ENCODE measurements at regions of chr12 and their contacts with region 1.

Region 1: DNA sequence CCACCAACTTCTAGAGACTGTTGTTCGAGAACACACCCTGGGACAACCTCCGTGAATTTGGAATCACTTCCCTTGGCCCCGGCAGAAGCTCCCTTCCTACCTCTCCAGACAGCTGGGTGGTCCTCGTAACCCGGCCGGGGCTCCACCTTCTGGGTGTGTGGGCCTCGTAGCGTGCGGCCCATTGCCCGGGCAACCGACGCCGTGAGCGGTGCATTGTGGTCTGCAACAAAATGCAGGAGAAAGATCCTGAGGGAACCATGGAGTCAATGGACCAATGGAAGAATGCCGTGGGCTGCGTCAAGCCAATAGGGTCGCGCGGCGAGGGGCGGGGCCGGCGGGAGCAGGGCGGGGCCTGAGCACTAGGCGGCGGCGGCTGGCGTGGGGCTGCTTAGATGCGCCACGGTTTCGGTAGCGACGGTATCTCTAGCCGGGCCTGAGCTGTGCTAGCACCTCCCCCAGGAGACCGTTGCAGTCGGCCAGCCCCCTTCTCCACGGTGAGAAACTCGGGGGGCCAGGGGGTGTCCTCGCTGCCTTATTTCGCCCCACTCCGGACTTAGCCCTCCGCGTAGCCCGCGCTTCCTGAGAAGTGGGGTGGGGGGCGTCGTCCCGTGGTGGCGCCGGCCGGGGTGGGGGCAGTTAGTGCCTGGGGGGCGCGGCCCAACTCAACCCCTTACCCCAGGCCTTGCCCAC is at the start of gene DYNLL1:
- DNase-seq: peak; percentile 98
- H3K4me3 ChIP-seq: peak within 1 kb of the TSS; percentile 64 to 98 (median 90)
- H3K27ac ChIP-seq: no peak within 1 kb of the TSS
- H3K4me1 ChIP-seq: peaks cover 15% of the 10 kb centered on the region
- H3K27me3 ChIP-seq: no peaks in the 10 kb centered on the region
- CTCF ChIP-seq: no peak
- POLR2A ChIP-seq: peak; percentile 99
- total RNA-seq, gene DYNLL1: 469 TPM in 2 replicates

Region 2: GRCh38 chr12:120342156-120342555 is 153.7 kb before region 1 on chr12:
- CTCF ChIA-PET with region 1: no interaction called
- POLR2A ChIA-PET with region 1: no interaction called
- dilution Hi-C with region 1: no loop called
- intact Hi-C with region 1: no loop called
- DNase-seq: no peak
- H3K4me3 ChIP-seq: no peak overlapping the region
- H3K27ac ChIP-seq: no peak overlapping the region
- H3K4me1 ChIP-seq: no peaks in the 10 kb centered on the region
- H3K27me3 ChIP-seq: no peaks in the 10 kb centered on the region
- CTCF ChIP-seq: no peak
- POLR2A ChIP-seq: no peak

Region 3: GRCh38 chr12:120437754-120438494 is 57.9 kb before region 1 on chr12 and contains the start of gene COX6A1:
- CTCF ChIA-PET with region 1: no interaction called
- POLR2A ChIA-PET with region 1: interaction called, 3 read pairs
- dilution Hi-C with region 1: no loop called
- intact Hi-C with region 1: loop called (anchors 2 kb)
- DNase-seq: peak; percentile 91
- H3K4me3 ChIP-seq: peak within 1 kb of the TSS; percentile 48 to 76 (median 49)
- H3K27ac ChIP-seq: peak within 1 kb of the TSS; percentile 2
- H3K4me1 ChIP-seq: peaks cover 14% of the 10 kb centered on the region
- H3K27me3 ChIP-seq: no peaks in the 10 kb centered on the region
- CTCF ChIP-seq: no peak
- POLR2A ChIP-seq: peak; percentile 93
- total RNA-seq, gene COX6A1: 299 and 302 TPM in 2 replicates

Region 4: GRCh38 chr12:120528861-120529525 is 33.1 kb after region 1 on chr12 and contains the start of gene COQ5:
- CTCF ChIA-PET with region 1: interaction called, 9 read pairs
- POLR2A ChIA-PET with region 1: no interaction called
- dilution Hi-C with region 1: no loop called
- intact Hi-C with region 1: loop called (anchors 1 kb)
- DNase-seq: peak; percentile 89
- H3K4me3 ChIP-seq: peak within 1 kb of the TSS; percentile 48 to 98 (median 77)
- H3K27ac ChIP-seq: peak within 1 kb of the TSS; percentile 79
- H3K4me1 ChIP-seq: peaks cover 15% of the 10 kb centered on the region
- H3K27me3 ChIP-seq: no peaks in the 10 kb centered on the region
- CTCF ChIP-seq: no peak
- POLR2A ChIP-seq: peak; percentile 88
- total RNA-seq, gene COQ5: 19.7 and 27.2 TPM in 2 replicates

Measured in endothelial cell of umbilical vein (primary cell).